ENCODE measurements at regions of chr6 and their contacts with region 1.

Region 1: GRCh38 chr6:7615611-7616383 is 25.8 kb downstream of the SNRNP48 start:
- DNase-seq: peak; percentile 75
- H3K4me3 Mint-ChIP-seq: peak overlapping the region; percentile 26
- H3K27ac Mint-ChIP-seq: no peak overlapping the region
- H3K4me1 Mint-ChIP-seq: peaks cover 28% of the 10 kb centered on the region
- H3K27me3 Mint-ChIP-seq: no peaks in the 10 kb centered on the region
- CTCF ChIP-seq: peak; percentile 87

Region 2: GRCh38 chr6:7238900-7239589 is 376.8 kb before region 1 on chr6:
- CTCF ChIA-PET with region 1: no interaction called
- POLR2A ChIA-PET with region 1: no interaction called
- intact Hi-C with region 1: loop called (anchors 1 kb)
- DNase-seq: peak; percentile 85
- H3K4me3 Mint-ChIP-seq: no peak overlapping the region
- H3K27ac Mint-ChIP-seq: peak overlapping the region; percentile 41
- H3K4me1 Mint-ChIP-seq: peaks cover 30% of the 10 kb centered on the region
- H3K27me3 Mint-ChIP-seq: no peaks in the 10 kb centered on the region
- CTCF ChIP-seq: peak; percentile 45

Region 3: DNA sequence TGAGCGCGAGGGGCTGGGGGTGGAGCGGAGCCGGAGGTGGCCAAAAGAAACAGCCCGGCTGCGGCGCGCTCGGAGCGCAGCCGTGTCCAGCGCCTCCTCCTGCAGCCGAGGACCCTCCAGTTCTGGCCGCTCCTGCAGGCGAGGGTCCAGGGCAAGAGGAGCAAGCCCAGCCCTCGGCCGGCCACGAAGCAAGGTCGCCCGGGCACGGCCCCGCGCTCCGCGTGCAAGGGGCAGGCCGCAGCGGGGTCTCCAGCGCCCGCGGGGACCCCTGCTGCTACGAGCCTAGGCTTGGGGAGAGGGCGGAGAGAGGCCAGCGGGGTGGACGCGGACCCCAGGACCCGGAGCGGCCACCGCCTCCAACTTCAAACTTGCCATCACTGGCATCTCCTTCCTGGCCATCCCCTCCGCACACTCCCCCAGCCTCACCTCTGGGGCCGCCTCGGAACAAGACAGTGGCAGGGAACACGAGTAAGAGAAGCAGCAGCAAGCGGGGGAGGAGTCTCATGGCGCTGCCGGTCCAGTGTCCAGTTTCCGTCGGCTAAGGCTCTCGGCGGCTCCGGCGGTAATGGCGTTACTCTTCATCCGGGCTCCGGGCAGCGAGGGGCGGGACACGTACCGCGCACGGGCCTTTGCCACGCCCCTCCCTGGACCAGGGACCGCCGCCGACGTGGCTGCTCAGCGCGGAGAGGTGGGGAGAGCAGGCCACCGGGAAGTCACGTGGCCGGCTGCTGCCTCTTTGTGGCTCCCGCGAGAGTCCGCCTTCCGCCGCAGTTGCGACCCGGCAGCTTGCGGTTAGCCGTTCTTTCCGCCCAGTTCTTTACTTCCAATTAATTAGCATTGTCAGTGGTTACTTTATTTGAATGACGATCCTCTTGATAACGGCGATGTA is 302.9 kb before region 1 on chr6 and contains the start of gene SSR1:
- CTCF ChIA-PET with region 1: interaction called, 3 read pairs
- POLR2A ChIA-PET with region 1: interaction called, 6 read pairs
- intact Hi-C with region 1: loop called (anchors 2 kb)
- DNase-seq: peak; percentile 96
- H3K4me3 Mint-ChIP-seq: peak within 1 kb of the TSS; percentile 91
- H3K27ac Mint-ChIP-seq: peak within 1 kb of the TSS; percentile 83
- H3K4me1 Mint-ChIP-seq: peaks cover 16% of the 10 kb centered on the region
- H3K27me3 Mint-ChIP-seq: no peaks in the 10 kb centered on the region
- CTCF ChIP-seq: no peak
- total RNA-seq, gene SSR1: 318 and 396 TPM in 2 replicates

Region 4: DNA sequence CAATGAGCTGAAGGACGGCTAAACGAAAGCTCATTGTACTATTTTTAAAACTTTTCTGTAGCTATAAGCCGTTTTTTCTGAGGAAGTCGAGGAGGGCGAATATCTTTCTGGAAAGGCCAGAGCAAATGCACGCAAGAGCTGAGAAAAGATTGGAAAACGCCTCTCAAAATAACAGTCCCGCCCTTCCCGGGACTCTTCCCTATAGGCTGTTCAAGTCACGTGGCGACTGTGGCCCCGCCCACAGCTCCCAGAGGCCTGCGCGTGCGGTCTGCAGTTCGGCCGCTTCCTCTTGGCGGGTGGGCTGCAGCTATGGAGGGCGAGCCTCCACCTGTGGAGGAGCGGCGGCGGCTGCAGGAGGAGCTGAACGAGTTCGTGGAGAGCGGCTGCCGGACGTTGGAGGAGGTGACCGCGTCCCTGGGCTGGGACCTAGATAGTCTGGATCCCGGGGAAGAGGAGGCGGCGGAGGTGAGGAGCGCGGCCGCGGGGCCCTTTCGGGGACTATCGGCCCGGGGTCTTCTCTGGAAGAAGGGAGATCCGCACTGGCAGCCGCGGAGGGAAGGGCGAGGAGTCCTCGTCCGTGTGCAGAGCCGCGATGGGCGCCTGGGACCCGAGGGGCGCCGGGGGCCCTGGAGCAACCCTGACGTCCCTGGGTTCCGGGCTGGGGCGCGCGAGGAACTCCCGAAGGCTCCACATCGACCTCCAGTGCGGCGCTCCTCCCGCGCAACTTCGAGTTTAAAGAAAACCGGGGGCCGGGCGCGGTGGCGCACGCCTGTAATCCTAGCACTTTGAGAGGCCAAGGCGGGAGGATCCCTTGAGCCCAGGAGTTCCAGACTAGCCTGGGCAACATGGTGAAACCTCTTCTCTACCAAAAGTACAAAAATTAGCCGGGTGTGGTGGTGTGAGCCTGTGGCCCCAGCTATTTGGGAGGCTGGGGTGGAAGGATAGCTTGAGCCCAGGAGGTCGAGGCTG is 25.6 kb before region 1 on chr6 and contains the start of gene SNRNP48:
- CTCF ChIA-PET with region 1: interaction called, 5 read pairs
- POLR2A ChIA-PET with region 1: interaction called, 11 read pairs
- intact Hi-C with region 1: no loop called
- DNase-seq: peak; percentile 94
- H3K4me3 Mint-ChIP-seq: peak within 1 kb of the TSS; percentile 90
- H3K27ac Mint-ChIP-seq: peak within 1 kb of the TSS; percentile 87
- H3K4me1 Mint-ChIP-seq: peaks cover 34% of the 10 kb centered on the region
- H3K27me3 Mint-ChIP-seq: no peaks in the 10 kb centered on the region
- CTCF ChIP-seq: no peak
- total RNA-seq, gene SNRNP48: 10.2 and 11.2 TPM in 2 replicates

Region 5: DNA sequence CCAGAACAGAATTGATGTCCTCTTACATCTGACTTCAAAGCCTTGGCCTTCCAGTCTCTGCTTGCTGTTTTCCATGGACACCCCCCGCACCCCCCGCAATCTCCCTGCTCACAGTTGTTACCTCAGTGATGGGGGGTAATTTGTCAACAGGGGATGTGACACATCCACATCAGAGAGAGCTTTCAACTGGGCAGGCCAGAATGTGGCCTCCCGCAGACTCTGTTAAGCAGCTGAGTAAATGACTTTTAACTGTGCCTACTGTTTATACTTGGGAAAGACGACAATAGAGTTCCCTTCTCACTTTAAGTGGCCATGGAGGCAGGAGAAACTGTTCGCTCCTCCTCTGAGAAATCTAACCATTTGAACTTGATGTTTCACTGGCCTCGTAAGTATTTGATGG is 243.8 kb after region 1 on chr6:
- CTCF ChIA-PET with region 1: no interaction called
- POLR2A ChIA-PET with region 1: no interaction called
- intact Hi-C with region 1: no loop called
- DNase-seq: no peak
- H3K4me3 Mint-ChIP-seq: no peak overlapping the region
- H3K27ac Mint-ChIP-seq: no peak overlapping the region
- H3K4me1 Mint-ChIP-seq: no peaks in the 10 kb centered on the region
- H3K27me3 Mint-ChIP-seq: no peaks in the 10 kb centered on the region
- CTCF ChIP-seq: no peak

Region 6: GRCh38 chr6:7992002-7992815 is 376.4 kb after region 1 on chr6:
- CTCF ChIA-PET with region 1: no interaction called
- POLR2A ChIA-PET with region 1: no interaction called
- intact Hi-C with region 1: loop called (anchors 1 kb)
- DNase-seq: peak; percentile 52
- H3K4me3 Mint-ChIP-seq: no peak overlapping the region
- H3K27ac Mint-ChIP-seq: no peak overlapping the region
- H3K4me1 Mint-ChIP-seq: peaks cover 14% of the 10 kb centered on the region
- H3K27me3 Mint-ChIP-seq: no peaks in the 10 kb centered on the region
- CTCF ChIP-seq: peak; percentile 35

Region 7: GRCh38 chr6:8063761-8064637 is 448.2 kb after region 1 on chr6 and contains the start of gene BLOC1S5:
- CTCF ChIA-PET with region 1: no interaction called
- POLR2A ChIA-PET with region 1: no interaction called
- intact Hi-C with region 1: loop called (anchors 2 kb)
- DNase-seq: peak; percentile 96
- H3K4me3 Mint-ChIP-seq: peak within 1 kb of the TSS; percentile 86
- H3K27ac Mint-ChIP-seq: peak within 1 kb of the TSS; percentile 82
- H3K4me1 Mint-ChIP-seq: peaks cover 5% of the 10 kb centered on the region
- H3K27me3 Mint-ChIP-seq: no peaks in the 10 kb centered on the region
- CTCF ChIP-seq: no peak
- total RNA-seq, gene BLOC1S5: 7.7 and 10.9 TPM in 2 replicates